Common myeloid progenitor, CD34-positive (primary cell): ENCODE measurements at regions of chr20 and their contacts with region 1.

Region 1: GRCh38 chr20:47677635-47678453 is 107.4 kb downstream of the SULF2 start:
- DNase-seq: peak; percentile 45 to 69 (median 67)
- H3K4me3 ChIP-seq: no peak overlapping the region
- H3K27ac ChIP-seq: no peak overlapping the region
- H3K4me1 ChIP-seq: peaks cover 0 to 6% (median 0%) of the 10 kb centered on the region in 4 experiments
- H3K27me3 ChIP-seq: no peaks in the 10 kb centered on the region

Region 2: GRCh38 chr20:47663333-47664067 is 14.3 kb before region 1 on chr20:
- CTCF ChIA-PET with region 1: interaction called, 32 read pairs
- POLR2A ChIA-PET with region 1: no interaction called
- DNase-seq: peak; percentile 60 to 74 (median 62)
- H3K4me3 ChIP-seq: no peak overlapping the region
- H3K27ac ChIP-seq: no peak overlapping the region
- H3K4me1 ChIP-seq: peaks cover 0 to 14% (median 7%) of the 10 kb centered on the region in 4 experiments
- H3K27me3 ChIP-seq: no peaks in the 10 kb centered on the region

Region 3: GRCh38 chr20:47691625-47692024 is 13.8 kb after region 1 on chr20:
- CTCF ChIA-PET with region 1: interaction called, 25 read pairs
- POLR2A ChIA-PET with region 1: no interaction called
- DNase-seq: peak; percentile 38 to 62 (median 59)
- H3K4me3 ChIP-seq: no peak overlapping the region
- H3K27ac ChIP-seq: no peak overlapping the region
- H3K4me1 ChIP-seq: peaks cover 0 to 10% (median 4%) of the 10 kb centered on the region in 4 experiments
- H3K27me3 ChIP-seq: no peaks in the 10 kb centered on the region

Region 4: GRCh38 chr20:47711046-47711752 is 33.4 kb after region 1 on chr20:
- CTCF ChIA-PET with region 1: interaction called, 24 read pairs
- POLR2A ChIA-PET with region 1: no interaction called
- DNase-seq: peak in 2 of 3 donors; percentile 24 to 29
- H3K4me3 ChIP-seq: peak overlapping the region in 1 of 7 experiments; percentile 14
- H3K27ac ChIP-seq: no peak overlapping the region
- H3K4me1 ChIP-seq: peaks cover 0 to 29% (median 15%) of the 10 kb centered on the region in 4 experiments
- H3K27me3 ChIP-seq: no peaks in the 10 kb centered on the region

Region 5: DNA sequence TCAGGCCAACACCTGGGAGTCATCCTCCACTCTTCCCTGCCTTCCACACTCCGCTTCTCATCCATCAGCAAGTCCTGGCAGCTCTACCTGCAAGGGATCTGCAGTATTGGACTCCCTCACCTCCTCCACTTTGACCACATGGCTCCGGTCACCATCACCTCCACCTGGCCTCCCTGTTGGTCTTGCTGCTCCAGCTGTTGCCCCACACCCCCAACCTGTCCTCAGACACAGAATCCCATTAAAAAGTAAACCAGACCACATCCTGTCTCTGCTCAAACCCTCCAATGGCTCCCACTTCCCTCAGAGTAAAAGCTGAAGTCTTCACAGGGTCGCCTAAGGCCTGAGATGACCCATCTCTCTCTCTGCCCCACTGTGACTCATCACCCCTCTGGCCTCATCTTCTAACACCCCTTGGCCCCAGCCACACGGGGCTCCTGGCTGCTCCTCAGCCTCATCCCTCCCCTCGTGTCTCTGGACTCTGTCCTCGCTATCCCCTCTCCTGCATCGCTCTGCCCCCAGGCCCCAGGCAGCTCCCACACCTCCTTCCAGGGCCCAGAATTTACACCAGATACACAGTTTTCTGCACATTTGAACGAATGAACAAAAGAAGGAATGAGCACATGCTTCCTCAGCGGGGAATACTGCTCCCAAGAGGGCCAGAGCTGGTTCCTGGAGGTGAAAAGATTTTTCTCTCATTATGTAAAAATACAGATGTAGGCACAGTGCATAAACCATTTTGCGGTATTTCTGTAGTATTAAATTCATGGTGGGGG is 292.7 kb after region 1 on chr20:
- CTCF ChIA-PET with region 1: no interaction called
- POLR2A ChIA-PET with region 1: no interaction called
- DNase-seq: no peak
- H3K4me3 ChIP-seq: no peak overlapping the region
- H3K27ac ChIP-seq: no peak overlapping the region
- H3K4me1 ChIP-seq: no peaks in the 10 kb centered on the region
- H3K27me3 ChIP-seq: peaks cover 0 to 35% (median 2%) of the 10 kb centered on the region in 5 experiments

Region 6: GRCh38 chr20:48620519-48621254 is 942.8 kb after region 1 on chr20:
- CTCF ChIA-PET with region 1: interaction called, 48 read pairs
- POLR2A ChIA-PET with region 1: no interaction called
- DNase-seq: peak; percentile 60 to 78 (median 76)
- H3K4me3 ChIP-seq: peak overlapping the region in 3 of 7 experiments; percentile 46 to 69 (median 59)
- H3K27ac ChIP-seq: no peak overlapping the region
- H3K4me1 ChIP-seq: peaks cover 0 to 20% (median 12%) of the 10 kb centered on the region in 4 experiments
- H3K27me3 ChIP-seq: peaks cover 0 to 18% (median 3%) of the 10 kb centered on the region in 5 experiments